A549 (cell line): ENCODE measurements at regions of chr2 and their contacts with region 1.

Region 1: GRCh38 chr2:85750587-85751575 is 2.9 kb upstream of the ATOH8 start:
- DNase-seq: peak; percentile 72 to 87
- ATAC-seq: peak; percentile 35 to 76; a peak in 5 of 6 replicates
- H3K4me3 ChIP-seq: no peak overlapping the region
- H3K27ac ChIP-seq: peak overlapping the region; percentile 29 to 61; a peak in 5 of 6 replicates
- H3K4me1 ChIP-seq: peaks cover 41% of the 10 kb centered on the region
- CTCF ChIP-seq: peak; percentile 89
- EP300 ChIP-seq: no peak
- POLR2A ChIP-seq: no peak
- RAD21 ChIP-seq: peak; percentile 90 to 95

Region 2: DNA sequence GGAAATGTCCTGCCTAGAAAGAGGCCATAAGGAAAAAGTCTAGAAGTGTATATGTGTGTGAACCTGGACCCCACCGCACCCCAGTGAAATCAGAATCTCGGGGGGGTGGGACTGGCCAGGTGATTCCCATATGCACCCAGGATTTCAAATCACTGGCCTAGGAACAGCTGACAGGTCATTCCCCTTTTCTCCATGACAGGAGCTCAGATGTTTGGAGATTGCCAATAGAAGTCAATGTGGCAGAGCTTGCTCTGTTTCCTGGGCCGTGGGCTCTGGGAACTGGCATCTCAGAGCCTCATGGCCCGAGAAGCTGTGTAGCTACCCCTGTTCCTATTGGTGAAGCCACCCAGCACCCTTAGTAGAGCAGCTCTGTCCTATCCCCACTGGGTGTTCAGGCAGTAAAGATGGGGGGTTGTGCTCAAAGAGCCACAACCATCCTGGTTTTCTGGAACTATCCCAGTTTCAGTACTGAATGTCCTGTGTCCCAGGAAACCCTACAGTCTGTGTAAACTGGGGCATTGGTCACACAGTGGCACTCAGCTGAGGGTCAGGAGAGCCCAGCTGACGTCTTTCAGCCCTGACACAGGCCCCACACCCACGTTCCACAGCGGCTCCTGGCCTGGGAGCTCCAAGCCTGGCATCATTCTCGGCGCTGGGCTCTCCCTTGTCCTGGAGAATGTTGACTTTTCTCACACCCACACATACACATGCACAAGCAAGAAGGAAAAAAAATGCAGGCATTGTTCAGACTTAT is 37.9 kb before region 1 on chr2:
- CTCF ChIA-PET with region 1: interaction called, 11 read pairs
- POLR2A ChIA-PET with region 1: no interaction called
- DNase-seq: peak in 1 of 2 experiments; percentile 54
- ATAC-seq: peak; percentile 35 to 43; a peak in 3 of 6 replicates
- H3K4me3 ChIP-seq: no peak overlapping the region
- H3K27ac ChIP-seq: peak overlapping the region; percentile 11 to 68; a peak in 2 of 6 replicates
- H3K4me1 ChIP-seq: peaks cover 16% of the 10 kb centered on the region; the same call in 2 of the 3 replicates
- CTCF ChIP-seq: no peak
- EP300 ChIP-seq: no peak
- POLR2A ChIP-seq: no peak
- RAD21 ChIP-seq: no peak

Region 3: GRCh38 chr2:85765081-85765731 is 14.3 kb after region 1 on chr2:
- CTCF ChIA-PET with region 1: interaction called, 159 read pairs
- POLR2A ChIA-PET with region 1: no interaction called
- DNase-seq: no peak
- ATAC-seq: no peak
- H3K4me3 ChIP-seq: no peak overlapping the region
- H3K27ac ChIP-seq: no peak overlapping the region
- H3K4me1 ChIP-seq: peaks cover 61% of the 10 kb centered on the region
- CTCF ChIP-seq: no peak
- EP300 ChIP-seq: no peak
- POLR2A ChIP-seq: no peak
- RAD21 ChIP-seq: no peak

Region 4: GRCh38 chr2:85785027-85785822 is 34.3 kb after region 1 on chr2:
- CTCF ChIA-PET with region 1: interaction called, 18 read pairs
- POLR2A ChIA-PET with region 1: no interaction called
- DNase-seq: no peak
- ATAC-seq: peak in 1 of 2 experiments; percentile 4; a peak in 2 of 6 replicates
- H3K4me3 ChIP-seq: no peak overlapping the region
- H3K27ac ChIP-seq: no peak overlapping the region
- H3K4me1 ChIP-seq: peaks cover 10% of the 10 kb centered on the region; the same call in 2 of the 3 replicates
- CTCF ChIP-seq: no peak
- EP300 ChIP-seq: no peak
- POLR2A ChIP-seq: no peak
- RAD21 ChIP-seq: no peak

Region 5: DNA sequence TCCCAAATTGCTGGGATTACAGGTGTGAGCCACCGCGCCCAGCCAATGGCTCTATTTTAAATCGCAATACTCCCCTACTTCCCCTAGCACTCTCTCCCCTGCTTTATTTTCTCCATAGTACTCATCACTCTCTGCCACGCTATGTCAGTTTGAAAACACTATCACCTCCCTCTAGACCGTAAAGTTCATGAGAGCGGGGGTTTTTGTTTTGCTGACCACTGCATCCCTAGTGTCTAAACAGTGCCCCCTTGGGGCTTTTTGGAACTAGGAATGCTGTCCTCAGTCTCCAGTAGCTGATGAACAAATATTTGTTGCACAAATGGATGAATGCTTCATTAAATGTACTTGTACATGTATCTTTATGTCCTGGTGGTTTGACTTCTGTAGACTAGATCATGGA is 47.0 kb after region 1 on chr2:
- CTCF ChIA-PET with region 1: interaction called, 1,675 read pairs
- POLR2A ChIA-PET with region 1: no interaction called
- DNase-seq: peak; percentile 26 to 43
- ATAC-seq: peak in 1 of 2 experiments; percentile 46; a peak in 2 of 6 replicates
- H3K4me3 ChIP-seq: no peak overlapping the region
- H3K27ac ChIP-seq: peak overlapping the region in 1 of 2 experiments; percentile 6; a peak in 2 of 6 replicates
- H3K4me1 ChIP-seq: peaks cover 43% of the 10 kb centered on the region
- CTCF ChIP-seq: peak; percentile 44
- EP300 ChIP-seq: no peak
- POLR2A ChIP-seq: no peak
- RAD21 ChIP-seq: peak; percentile 64 to 75

Region 6: GRCh38 chr2:85976106-85976920 is 225.4 kb after region 1 on chr2:
- CTCF ChIA-PET with region 1: no interaction called
- POLR2A ChIA-PET with region 1: no interaction called
- DNase-seq: no peak
- ATAC-seq: no peak; a peak in 3 of 6 replicates
- H3K4me3 ChIP-seq: no peak overlapping the region
- H3K27ac ChIP-seq: peak overlapping the region in 1 of 2 experiments; percentile 49; a peak in 3 of 6 replicates
- H3K4me1 ChIP-seq: peaks cover 15% of the 10 kb centered on the region
- CTCF ChIP-seq: no peak
- EP300 ChIP-seq: no peak
- POLR2A ChIP-seq: no peak
- RAD21 ChIP-seq: no peak